ENCODE measurements at regions of chr14 and their contacts with region 1.

Region 1: GRCh38 chr14:105065280-105066228 is at the start of gene GPR132:
- DNase-seq: peak; percentile 95
- H3K4me3 Mint-ChIP-seq: peak within 1 kb of the TSS; percentile 94
- H3K27ac Mint-ChIP-seq: peak within 1 kb of the TSS; percentile 86
- H3K4me1 Mint-ChIP-seq: peaks cover 70% of the 10 kb centered on the region
- H3K27me3 Mint-ChIP-seq: no peaks in the 10 kb centered on the region
- total RNA-seq, gene GPR132: 33.4 to 34.2 TPM

Region 2: DNA sequence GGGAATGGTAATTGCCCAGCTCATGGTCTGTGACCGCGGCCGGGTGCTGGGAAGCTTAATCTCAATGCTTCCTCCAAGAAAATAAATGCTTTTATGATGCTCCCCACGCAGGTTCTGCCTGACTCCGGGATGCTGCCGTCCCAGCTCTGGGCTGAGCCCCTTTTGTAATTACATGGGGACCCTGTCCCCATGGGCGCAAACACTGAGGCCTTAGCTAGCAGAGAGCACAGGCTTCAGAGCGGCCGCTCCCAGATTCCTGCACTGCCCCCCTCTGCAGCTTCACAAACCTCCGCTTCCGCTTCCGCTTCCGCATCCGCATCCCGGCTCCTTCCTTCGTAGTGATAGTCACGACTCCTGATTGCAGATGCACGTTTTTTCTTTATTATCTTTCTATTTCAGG is 797.7 kb before region 1 on chr14:
- CTCF ChIA-PET with region 1: no interaction called
- POLR2A ChIA-PET with region 1: no interaction called
- intact Hi-C with region 1: no loop called
- DNase-seq: peak; percentile 7
- H3K4me3 Mint-ChIP-seq: no peak overlapping the region
- H3K27ac Mint-ChIP-seq: no peak overlapping the region
- H3K4me1 Mint-ChIP-seq: no peaks in the 10 kb centered on the region
- H3K27me3 Mint-ChIP-seq: no peaks in the 10 kb centered on the region

Region 3: GRCh38 chr14:105026803-105027563 is 38.6 kb before region 1 on chr14:
- CTCF ChIA-PET with region 1: interaction called, 3 read pairs
- POLR2A ChIA-PET with region 1: interaction called, 16 read pairs
- intact Hi-C with region 1: loop called (anchors 1 kb)
- DNase-seq: no peak
- H3K4me3 Mint-ChIP-seq: no peak overlapping the region
- H3K27ac Mint-ChIP-seq: no peak overlapping the region
- H3K4me1 Mint-ChIP-seq: peaks cover 43% of the 10 kb centered on the region
- H3K27me3 Mint-ChIP-seq: no peaks in the 10 kb centered on the region

Region 4: DNA sequence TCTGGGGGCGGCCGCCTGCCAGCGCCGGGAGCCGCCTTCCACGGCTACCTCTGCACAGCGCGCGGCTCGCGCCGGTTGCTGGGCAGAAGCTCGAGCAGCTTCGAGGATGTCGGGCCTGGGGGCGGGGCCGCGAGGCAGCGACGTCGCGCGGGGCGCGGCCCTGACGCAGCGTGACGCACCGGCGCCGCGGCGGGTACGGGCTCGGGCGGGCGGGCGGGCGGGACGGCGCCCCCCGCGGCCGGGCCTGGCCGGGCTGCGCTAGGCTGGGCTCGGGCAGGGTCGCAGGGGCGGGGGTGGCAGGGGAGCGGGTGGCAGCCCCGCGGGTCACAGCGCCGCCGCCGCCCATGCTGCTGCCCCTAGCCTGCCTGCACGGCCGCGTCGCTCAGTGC is 182.8 kb after region 1 on chr14 and contains the start of gene BTBD6:
- CTCF ChIA-PET with region 1: no interaction called
- POLR2A ChIA-PET with region 1: no interaction called
- intact Hi-C with region 1: no loop called
- DNase-seq: peak; percentile 92
- H3K4me3 Mint-ChIP-seq: peak within 1 kb of the TSS; percentile 74
- H3K27ac Mint-ChIP-seq: peak within 1 kb of the TSS; percentile 49
- H3K4me1 Mint-ChIP-seq: peaks cover 25% of the 10 kb centered on the region
- H3K27me3 Mint-ChIP-seq: no peaks in the 10 kb centered on the region
- total RNA-seq, gene BTBD6: 38.5 to 39.5 TPM

Region 5: DNA sequence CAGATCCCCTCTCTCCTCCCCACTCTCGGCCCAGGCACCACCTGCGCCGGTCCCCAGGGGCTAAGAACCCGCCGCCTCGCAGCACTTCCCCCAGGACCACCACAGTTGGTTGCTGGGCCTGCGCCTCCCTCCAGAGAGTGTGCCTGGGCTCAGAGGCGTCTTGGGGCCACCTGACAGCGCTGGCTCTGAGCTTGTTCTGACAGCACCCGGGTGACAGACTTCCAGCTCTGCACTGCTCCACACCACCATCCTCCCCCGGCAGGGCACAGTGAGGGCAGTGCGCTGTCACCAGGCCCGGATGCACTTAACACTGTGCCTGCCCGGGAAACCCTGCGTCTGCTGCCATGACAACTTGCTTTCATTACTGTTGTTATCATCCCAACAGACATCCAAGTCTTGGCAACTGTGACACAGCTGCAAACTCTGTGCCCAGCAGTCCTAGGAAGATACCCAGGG is 228.6 kb after region 1 on chr14:
- CTCF ChIA-PET with region 1: no interaction called
- POLR2A ChIA-PET with region 1: interaction called, 3 read pairs
- intact Hi-C with region 1: loop called (anchors 1 kb)
- DNase-seq: peak; percentile 85
- H3K4me3 Mint-ChIP-seq: peak overlapping the region; percentile 39
- H3K27ac Mint-ChIP-seq: peak overlapping the region; percentile 76
- H3K4me1 Mint-ChIP-seq: peaks cover 43% of the 10 kb centered on the region
- H3K27me3 Mint-ChIP-seq: no peaks in the 10 kb centered on the region

Measured in activated CD4-positive, alpha-beta memory T cell treated with anti-CD3 and anti-CD28 coated beads for 36 hours (primary cell).